B cell (primary cell): ENCODE measurements at regions of chr2 and their contacts with region 1.

Region 1: DNA sequence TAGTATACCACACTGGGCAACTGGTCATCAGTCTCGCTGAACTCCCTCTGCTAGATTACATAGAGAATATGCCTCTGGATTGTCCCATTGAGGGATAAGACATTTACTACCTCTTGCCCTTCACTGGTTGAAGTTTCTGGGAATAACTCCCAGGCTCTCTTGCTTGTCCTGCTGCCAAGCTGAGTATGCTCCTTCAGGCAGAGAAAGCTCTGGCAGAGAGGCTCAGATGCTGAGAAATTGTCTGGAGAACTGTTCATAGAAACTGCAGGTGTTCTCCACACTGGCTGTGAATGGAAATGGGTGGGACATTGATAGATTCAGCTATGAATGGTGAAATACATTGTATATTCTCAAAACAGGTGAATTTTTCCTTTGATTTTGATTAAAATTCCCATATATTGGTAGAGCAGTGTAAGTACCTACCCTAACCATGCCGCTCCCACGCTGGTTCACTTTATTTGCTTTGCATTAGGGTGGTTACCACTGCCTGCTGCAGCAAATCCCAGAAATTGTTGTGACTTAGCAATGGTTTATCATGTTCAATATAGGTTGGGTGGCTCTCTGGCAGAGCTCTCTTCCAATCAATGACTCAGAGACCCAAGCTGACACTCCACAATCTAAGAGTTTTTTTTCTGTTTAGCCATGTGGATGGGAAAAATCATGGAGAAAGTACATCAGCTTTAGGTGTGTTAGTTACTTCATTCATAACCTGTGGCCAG is 36.7 kb downstream of the FAM117B start:
- DNase-seq: no peak
- ATAC-seq: no peak
- H3K4me3 ChIP-seq: peak overlapping the region in 1 of 5 experiments; percentile 27
- H3K4me3 Mint-ChIP-seq: peak overlapping the region; percentile 5
- H3K27ac ChIP-seq: peak overlapping the region; percentile 16 to 67
- H3K27ac Mint-ChIP-seq: peak overlapping the region; percentile 90
- H3K4me1 ChIP-seq: peaks cover 82 to 83% of the 10 kb centered on the region in 2 donors
- H3K4me1 Mint-ChIP-seq: peaks cover 77% of the 10 kb centered on the region
- H3K27me3 ChIP-seq: no peaks in the 10 kb centered on the region
- H3K27me3 Mint-ChIP-seq: no peaks in the 10 kb centered on the region
- CTCF ChIP-seq: no peak

Region 2: DNA sequence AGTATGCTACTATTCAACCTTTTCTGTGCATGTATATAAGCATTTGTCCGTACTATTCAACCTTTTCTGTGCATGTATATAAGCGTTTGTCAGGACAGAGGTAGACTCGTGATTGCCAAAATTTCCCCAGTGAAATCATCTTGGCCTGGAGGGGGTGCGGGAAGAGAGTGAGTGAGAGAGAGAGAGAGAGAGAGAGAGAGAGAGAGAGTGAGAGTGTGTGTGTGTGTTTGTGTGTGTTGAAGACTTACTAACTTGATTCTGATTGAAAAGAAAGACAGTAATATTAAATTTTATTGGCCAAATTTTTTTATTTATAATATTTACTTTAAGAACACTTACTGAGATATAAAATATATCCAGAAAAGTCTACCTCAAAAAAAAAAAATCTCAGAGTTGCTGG is 17.6 kb before region 1 on chr2:
- CTCF ChIA-PET with region 1: interaction called, 9 read pairs
- POLR2A ChIA-PET with region 1: interaction called, 10 read pairs
- intact Hi-C with region 1: no loop called
- DNase-seq: no peak
- ATAC-seq: no peak
- H3K4me3 ChIP-seq: no peak overlapping the region
- H3K4me3 Mint-ChIP-seq: peak overlapping the region; percentile 8
- H3K27ac ChIP-seq: peak overlapping the region in 1 of 2 donors; percentile 61
- H3K27ac Mint-ChIP-seq: peak overlapping the region; percentile 64
- H3K4me1 ChIP-seq: peaks cover 54 to 76% of the 10 kb centered on the region in 2 donors
- H3K4me1 Mint-ChIP-seq: peaks cover 77% of the 10 kb centered on the region
- H3K27me3 ChIP-seq: no peaks in the 10 kb centered on the region
- H3K27me3 Mint-ChIP-seq: no peaks in the 10 kb centered on the region
- CTCF ChIP-seq: no peak

Region 3: DNA sequence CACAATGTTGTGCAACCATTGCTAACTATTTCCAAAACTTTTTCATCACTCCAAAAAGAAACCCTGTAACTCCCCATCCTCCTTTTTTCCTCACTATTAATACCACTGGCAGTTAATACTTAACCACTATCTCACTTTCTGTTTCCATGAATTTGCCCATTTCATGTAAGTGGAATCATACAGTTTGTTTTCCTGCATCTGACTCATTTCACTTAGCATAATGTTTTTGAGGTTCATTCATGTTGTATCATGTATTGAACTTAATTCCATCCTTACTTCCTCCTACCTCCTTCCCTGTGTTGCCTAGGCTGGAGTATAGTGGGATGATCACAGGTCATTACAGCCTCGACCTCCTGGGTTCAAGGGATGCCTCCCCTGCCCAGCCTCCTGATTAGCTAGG is 31.6 kb after region 1 on chr2:
- CTCF ChIA-PET with region 1: interaction called, 7 read pairs
- POLR2A ChIA-PET with region 1: interaction called, 4 read pairs
- intact Hi-C with region 1: loop called (anchors 5 kb)
- DNase-seq: no peak
- ATAC-seq: no peak
- H3K4me3 ChIP-seq: no peak overlapping the region
- H3K4me3 Mint-ChIP-seq: no peak overlapping the region
- H3K27ac ChIP-seq: peak overlapping the region in 1 of 2 donors; percentile 12
- H3K27ac Mint-ChIP-seq: peak overlapping the region; percentile 3
- H3K4me1 ChIP-seq: peaks cover 13 to 26% of the 10 kb centered on the region in 2 donors
- H3K4me1 Mint-ChIP-seq: peaks cover 55% of the 10 kb centered on the region
- H3K27me3 ChIP-seq: no peaks in the 10 kb centered on the region
- H3K27me3 Mint-ChIP-seq: no peaks in the 10 kb centered on the region
- CTCF ChIP-seq: no peak

Region 4: GRCh38 chr2:202718614-202719013 is 47.1 kb after region 1 on chr2:
- CTCF ChIA-PET with region 1: no interaction called
- POLR2A ChIA-PET with region 1: no interaction called
- intact Hi-C with region 1: loop called (anchors 5 kb)
- DNase-seq: no peak
- ATAC-seq: no peak
- H3K4me3 ChIP-seq: no peak overlapping the region
- H3K4me3 Mint-ChIP-seq: no peak overlapping the region
- H3K27ac ChIP-seq: peak overlapping the region in 1 of 2 donors; percentile 4
- H3K27ac Mint-ChIP-seq: peak overlapping the region; percentile 8
- H3K4me1 ChIP-seq: peaks cover 11 to 20% of the 10 kb centered on the region in 2 donors
- H3K4me1 Mint-ChIP-seq: peaks cover 44% of the 10 kb centered on the region
- H3K27me3 ChIP-seq: no peaks in the 10 kb centered on the region
- H3K27me3 Mint-ChIP-seq: no peaks in the 10 kb centered on the region
- CTCF ChIP-seq: no peak